Naive thymus-derived CD4-positive, alpha-beta T cell (primary cell): ENCODE measurements at regions of chr12 and their contacts with region 1.

Region 1: DNA sequence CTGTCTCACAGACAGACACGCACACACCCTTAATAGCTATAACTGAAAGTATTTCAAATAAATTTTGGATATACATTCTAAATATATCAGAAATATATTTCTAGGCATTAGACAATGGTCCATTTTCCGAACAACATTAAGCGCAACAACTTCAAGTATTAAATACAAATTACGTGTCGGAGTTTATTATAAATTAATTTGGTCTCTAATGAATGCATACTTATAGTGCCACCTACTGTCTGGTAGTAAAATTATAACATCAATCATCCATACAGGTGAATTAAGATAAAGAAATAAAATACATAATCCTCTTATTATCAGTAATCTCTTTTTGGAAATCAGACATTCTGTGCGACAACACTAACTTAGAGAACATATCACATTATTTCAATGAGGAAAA is 27.2 kb upstream of the CMAS start:
- DNase-seq: peak in 5 of 9 donors; percentile 6 to 25 (median 13)
- ATAC-seq: no peak
- H3K4me3 ChIP-seq: no peak overlapping the region
- H3K4me3 Mint-ChIP-seq: no peak overlapping the region
- H3K27ac ChIP-seq: no peak overlapping the region
- H3K27ac Mint-ChIP-seq: no peak overlapping the region
- H3K4me1 ChIP-seq: no peaks in the 10 kb centered on the region
- H3K4me1 Mint-ChIP-seq: no peaks in the 10 kb centered on the region
- H3K27me3 ChIP-seq: no peaks in the 10 kb centered on the region
- H3K27me3 Mint-ChIP-seq: peaks cover 0 to 17% (median 3%) of the 10 kb centered on the region in 5 donors

Region 2: DNA sequence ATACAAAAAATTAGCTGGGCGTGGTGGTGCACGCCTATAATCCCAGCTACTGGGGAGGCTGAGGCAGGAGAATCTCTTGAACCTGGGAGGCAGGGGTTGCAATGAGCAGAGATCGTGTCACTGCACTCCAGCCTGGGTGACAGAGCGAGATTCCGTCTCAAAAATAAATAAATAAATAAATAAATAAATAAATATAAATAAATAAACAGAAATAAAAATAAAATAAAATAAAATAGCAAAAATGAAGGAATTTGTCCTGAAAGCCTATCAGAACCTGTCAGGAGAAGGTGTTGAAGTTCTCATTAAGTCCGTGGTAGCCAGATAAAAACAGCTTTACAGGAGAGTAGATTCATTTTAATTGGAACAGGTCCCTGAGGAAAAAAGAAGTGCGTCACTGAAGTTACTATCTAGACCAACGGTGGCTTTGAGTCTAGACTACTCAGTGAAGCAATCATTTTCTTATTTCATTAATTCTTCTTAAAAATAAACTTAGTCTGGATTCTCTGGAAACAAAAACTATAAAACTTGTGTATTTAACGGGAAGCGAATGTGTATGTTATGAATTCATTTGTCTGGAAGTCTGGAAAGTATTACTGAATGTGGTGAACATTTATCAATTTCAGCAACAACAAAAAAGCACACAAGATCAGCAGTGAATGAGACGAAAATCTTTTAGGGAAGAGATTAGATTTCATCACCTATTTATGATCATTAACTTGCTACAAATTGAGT is 1899.1 kb before region 1 on chr12:
- CTCF ChIA-PET with region 1: no interaction called
- POLR2A ChIA-PET with region 1: no interaction called
- intact Hi-C with region 1: no loop called
- DNase-seq: no peak
- ATAC-seq: no peak
- H3K4me3 ChIP-seq: no peak overlapping the region
- H3K4me3 Mint-ChIP-seq: no peak overlapping the region
- H3K27ac ChIP-seq: no peak overlapping the region
- H3K27ac Mint-ChIP-seq: no peak overlapping the region
- H3K4me1 ChIP-seq: no peaks in the 10 kb centered on the region
- H3K4me1 Mint-ChIP-seq: peaks cover 0 to 2% (median 0%) of the 10 kb centered on the region in 7 donors
- H3K27me3 ChIP-seq: no peaks in the 10 kb centered on the region
- H3K27me3 Mint-ChIP-seq: no peaks in the 10 kb centered on the region

Region 3: DNA sequence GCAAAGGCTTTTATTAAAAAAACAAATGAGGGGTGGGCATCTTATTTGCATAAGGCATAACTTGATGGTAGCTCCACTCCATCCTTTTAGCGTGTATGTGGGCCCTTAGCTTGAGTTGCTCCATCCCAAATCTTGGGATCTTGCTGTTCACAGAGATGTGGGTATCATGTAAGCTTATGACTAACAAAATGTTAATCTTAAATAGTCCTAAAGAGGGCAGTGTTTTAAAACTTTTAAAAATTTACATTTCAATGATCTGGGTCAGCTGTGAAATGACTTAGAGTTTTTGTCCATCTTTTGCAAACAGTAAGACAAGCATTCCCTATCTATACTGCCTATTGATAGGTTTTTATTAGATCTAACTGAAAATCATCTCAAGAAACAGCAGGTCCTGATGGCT is 770.2 kb before region 1 on chr12:
- CTCF ChIA-PET with region 1: no interaction called
- POLR2A ChIA-PET with region 1: no interaction called
- intact Hi-C with region 1: loop called in 1 of 2 experiments (anchors 1 kb)
- DNase-seq: no peak
- ATAC-seq: no peak
- H3K4me3 ChIP-seq: no peak overlapping the region
- H3K4me3 Mint-ChIP-seq: no peak overlapping the region
- H3K27ac ChIP-seq: no peak overlapping the region
- H3K27ac Mint-ChIP-seq: no peak overlapping the region
- H3K4me1 ChIP-seq: no peaks in the 10 kb centered on the region
- H3K4me1 Mint-ChIP-seq: no peaks in the 10 kb centered on the region
- H3K27me3 ChIP-seq: no peaks in the 10 kb centered on the region
- H3K27me3 Mint-ChIP-seq: peaks cover 0 to 5% (median 0%) of the 10 kb centered on the region in 5 donors

Region 4: DNA sequence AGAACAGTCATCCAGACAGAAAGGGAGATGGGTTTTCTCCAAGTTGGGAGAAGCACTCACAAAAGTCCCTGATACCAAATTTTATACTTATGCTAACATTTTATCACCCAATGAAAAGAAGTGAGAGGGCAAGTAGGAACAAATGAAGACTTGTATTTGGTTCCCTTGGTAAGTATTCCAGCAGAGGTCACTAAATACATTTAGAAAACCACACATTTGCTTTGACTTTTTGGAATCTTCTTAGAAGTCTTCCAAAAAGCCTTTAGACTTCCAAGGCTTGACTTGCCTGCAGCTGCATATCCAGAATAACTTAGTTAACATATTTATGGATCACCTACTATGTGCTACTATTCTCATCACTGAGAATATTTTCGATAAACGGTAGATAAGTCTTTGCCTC is 411.2 kb before region 1 on chr12:
- CTCF ChIA-PET with region 1: interaction called, 3 read pairs
- POLR2A ChIA-PET with region 1: no interaction called
- intact Hi-C with region 1: loop called in 1 of 2 experiments (anchors 1 kb)
- DNase-seq: peak in 6 of 9 donors; percentile 14 to 57 (median 43)
- ATAC-seq: no peak
- H3K4me3 ChIP-seq: no peak overlapping the region
- H3K4me3 Mint-ChIP-seq: no peak overlapping the region
- H3K27ac ChIP-seq: no peak overlapping the region
- H3K27ac Mint-ChIP-seq: no peak overlapping the region
- H3K4me1 ChIP-seq: peaks cover 0 to 10% of the 10 kb centered on the region in 2 donors
- H3K4me1 Mint-ChIP-seq: peaks cover 2 to 8% (median 7%) of the 10 kb centered on the region in 7 donors
- H3K27me3 ChIP-seq: no peaks in the 10 kb centered on the region
- H3K27me3 Mint-ChIP-seq: peaks cover 0 to 7% (median 0%) of the 10 kb centered on the region in 5 donors